H1 (cell line): ENCODE measurements at regions of chr1 and their contacts with region 1.

Region 1: GRCh38 chr1:18322368-18323032 is 158.2 kb upstream of the KLHDC7A start:
- DNase-seq: peak in 1 of 2 experiments; percentile 78
- H3K4me3 ChIP-seq: no peak overlapping the region
- H3K27ac ChIP-seq: no peak overlapping the region
- H3K4me1 ChIP-seq: peaks cover 0 to 6% (median 2%) of the 10 kb centered on the region in 4 experiments; a peak in 4 of 7 replicates
- H3K27me3 ChIP-seq: peaks cover 0 to 8% (median 5%) of the 10 kb centered on the region in 4 experiments; a peak in 5 of 7 replicates
- CTCF ChIP-seq: peak; percentile 63 to 76 (median 71)
- EP300 ChIP-seq: no peak
- POLR2A ChIP-seq: no peak
- RAD21 ChIP-seq: peak; percentile 41 to 57; a peak in 3 of 4 replicates

Region 2: GRCh38 chr1:18299441-18300338 is 22.8 kb before region 1 on chr1:
- CTCF ChIA-PET with region 1: interaction called, 132 read pairs
- POLR2A ChIA-PET with region 1: interaction called, 6 read pairs
- DNase-seq: peak in 1 of 2 experiments; percentile 62
- H3K4me3 ChIP-seq: no peak overlapping the region
- H3K27ac ChIP-seq: peak overlapping the region; percentile 18; the same call in 1 of the 2 replicates
- H3K4me1 ChIP-seq: peaks cover 17 to 36% (median 18%) of the 10 kb centered on the region in 4 experiments
- H3K27me3 ChIP-seq: no peaks in the 10 kb centered on the region
- CTCF ChIP-seq: peak; percentile 75 to 86 (median 84)
- EP300 ChIP-seq: no peak
- POLR2A ChIP-seq: no peak
- RAD21 ChIP-seq: peak; percentile 53 to 71

Region 3: GRCh38 chr1:18332581-18332980 is 10.1 kb after region 1 on chr1:
- CTCF ChIA-PET with region 1: interaction called, 71 read pairs
- POLR2A ChIA-PET with region 1: no interaction called
- DNase-seq: no peak
- H3K4me3 ChIP-seq: no peak overlapping the region
- H3K27ac ChIP-seq: no peak overlapping the region
- H3K4me1 ChIP-seq: peaks cover 0 to 6% (median 4%) of the 10 kb centered on the region in 4 experiments; a peak in 4 of 7 replicates
- H3K27me3 ChIP-seq: no peaks in the 10 kb centered on the region
- CTCF ChIP-seq: no peak
- EP300 ChIP-seq: no peak
- POLR2A ChIP-seq: no peak
- RAD21 ChIP-seq: no peak

Region 4: DNA sequence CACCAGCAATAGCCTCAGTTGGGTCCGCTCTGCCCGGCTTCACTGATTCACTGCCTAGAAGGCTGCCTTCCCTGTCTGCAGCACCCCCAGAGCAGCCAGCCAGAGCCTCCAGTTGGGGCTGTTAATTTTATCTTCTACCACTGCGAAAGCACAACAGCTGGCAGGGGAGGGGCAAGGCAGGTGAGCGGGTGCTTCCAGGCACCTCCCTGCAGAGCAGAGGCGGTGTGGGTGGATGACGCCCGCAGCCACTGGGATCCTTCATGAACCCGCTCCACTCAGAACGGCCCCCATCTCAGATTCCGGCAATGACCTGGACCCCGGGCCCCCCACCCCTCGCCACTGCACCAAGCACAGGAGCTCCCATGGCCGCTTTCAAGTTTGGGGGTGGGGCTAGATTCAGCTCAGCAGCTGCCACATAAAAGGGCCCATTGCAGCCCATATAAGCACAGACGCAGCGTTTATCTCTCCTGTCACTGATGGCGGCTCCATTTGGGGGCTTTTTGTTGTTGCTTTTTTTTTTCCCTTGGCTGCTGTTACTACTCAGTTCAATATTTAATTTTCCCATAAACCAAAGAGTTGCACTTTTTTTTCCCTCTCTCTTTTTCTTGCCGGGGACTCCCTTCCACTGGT is 30.3 kb after region 1 on chr1:
- CTCF ChIA-PET with region 1: interaction called, 15 read pairs
- POLR2A ChIA-PET with region 1: no interaction called
- DNase-seq: no peak
- H3K4me3 ChIP-seq: no peak overlapping the region
- H3K27ac ChIP-seq: no peak overlapping the region
- H3K4me1 ChIP-seq: peaks cover 3 to 7% (median 6%) of the 10 kb centered on the region in 4 experiments; a peak in 6 of 7 replicates
- H3K27me3 ChIP-seq: no peaks in the 10 kb centered on the region
- CTCF ChIP-seq: no peak
- EP300 ChIP-seq: peak in 1 of 2 experiments; percentile 8; a peak in 1 of 3 replicates
- POLR2A ChIP-seq: no peak
- RAD21 ChIP-seq: no peak

Region 5: DNA sequence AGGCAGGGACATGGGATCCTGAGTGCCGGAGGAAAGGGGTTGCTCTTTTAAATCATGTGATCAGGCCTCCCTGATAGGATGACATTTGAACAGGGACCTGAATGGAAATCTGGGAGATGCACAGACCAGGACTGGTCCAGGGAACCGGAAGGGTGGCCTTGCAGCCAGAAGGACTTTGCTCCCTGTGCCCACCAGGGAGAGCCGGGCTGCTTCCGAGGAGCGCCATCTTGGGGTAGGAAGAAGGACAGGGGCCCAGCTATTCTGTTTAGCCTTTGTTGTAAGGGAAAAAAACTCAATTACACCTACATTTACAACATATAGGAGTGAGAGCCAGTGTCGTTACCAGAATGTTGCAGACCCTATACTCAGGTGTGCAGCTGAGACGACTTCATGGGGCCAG is 163.7 kb after region 1 on chr1:
- CTCF ChIA-PET with region 1: interaction called, 17 read pairs
- POLR2A ChIA-PET with region 1: interaction called, 3 read pairs
- DNase-seq: peak; percentile 19 to 74
- H3K4me3 ChIP-seq: no peak overlapping the region
- H3K27ac ChIP-seq: no peak overlapping the region
- H3K4me1 ChIP-seq: peaks cover 0 to 18% (median 8%) of the 10 kb centered on the region in 4 experiments; a peak in 6 of 7 replicates
- H3K27me3 ChIP-seq: no peaks in the 10 kb centered on the region
- CTCF ChIP-seq: peak; percentile 74 to 97 (median 79)
- EP300 ChIP-seq: no peak
- POLR2A ChIP-seq: peak in 1 of 2 experiments; percentile 26; a peak in 1 of 3 replicates
- RAD21 ChIP-seq: peak; percentile 68 to 83

Region 6: DNA sequence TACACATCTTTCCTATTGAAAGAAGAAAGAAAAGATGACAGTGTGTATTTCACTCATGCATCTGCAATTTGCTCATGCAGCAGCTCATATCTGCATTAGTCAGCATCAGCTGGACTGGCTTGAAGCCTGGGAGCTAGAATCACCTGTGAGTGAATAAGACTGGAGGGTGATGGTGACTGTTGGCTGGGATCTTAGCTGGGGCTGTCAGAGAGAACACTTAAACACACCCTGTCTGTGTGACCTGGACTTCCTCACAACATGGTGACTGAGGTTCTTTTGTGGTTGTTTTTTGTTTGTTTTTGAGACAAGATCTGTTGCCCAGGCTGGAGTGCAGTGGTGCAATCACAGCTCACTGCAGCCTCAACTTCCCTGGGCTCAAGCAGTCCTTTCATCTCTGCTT is 183.2 kb after region 1 on chr1:
- CTCF ChIA-PET with region 1: no interaction called
- POLR2A ChIA-PET with region 1: no interaction called
- DNase-seq: no peak
- H3K4me3 ChIP-seq: no peak overlapping the region
- H3K27ac ChIP-seq: no peak overlapping the region
- H3K4me1 ChIP-seq: no peaks in the 10 kb centered on the region
- H3K27me3 ChIP-seq: no peaks in the 10 kb centered on the region; a peak in 1 of 7 replicates
- CTCF ChIP-seq: no peak
- EP300 ChIP-seq: no peak
- POLR2A ChIP-seq: no peak
- RAD21 ChIP-seq: no peak

Region 7: GRCh38 chr1:18581420-18581880 is 258.9 kb after region 1 on chr1:
- CTCF ChIA-PET with region 1: interaction called, 23 read pairs
- POLR2A ChIA-PET with region 1: no interaction called
- DNase-seq: peak in 1 of 2 experiments; percentile 93
- H3K4me3 ChIP-seq: no peak overlapping the region
- H3K27ac ChIP-seq: no peak overlapping the region
- H3K4me1 ChIP-seq: no peaks in the 10 kb centered on the region; a peak in 1 of 7 replicates
- H3K27me3 ChIP-seq: peaks cover 0 to 2% (median 0%) of the 10 kb centered on the region in 4 experiments; a peak in 3 of 7 replicates
- CTCF ChIP-seq: peak; percentile 94 to 100 (median 96)
- EP300 ChIP-seq: no peak
- POLR2A ChIP-seq: no peak
- RAD21 ChIP-seq: peak; percentile 98 to 99